Activated CD4-positive, alpha-beta memory T cell treated with anti-CD3 and anti-CD28 coated beads for 36 hours (primary cell): ENCODE measurements at regions of chr15 and their contacts with region 1.

Region 1: DNA sequence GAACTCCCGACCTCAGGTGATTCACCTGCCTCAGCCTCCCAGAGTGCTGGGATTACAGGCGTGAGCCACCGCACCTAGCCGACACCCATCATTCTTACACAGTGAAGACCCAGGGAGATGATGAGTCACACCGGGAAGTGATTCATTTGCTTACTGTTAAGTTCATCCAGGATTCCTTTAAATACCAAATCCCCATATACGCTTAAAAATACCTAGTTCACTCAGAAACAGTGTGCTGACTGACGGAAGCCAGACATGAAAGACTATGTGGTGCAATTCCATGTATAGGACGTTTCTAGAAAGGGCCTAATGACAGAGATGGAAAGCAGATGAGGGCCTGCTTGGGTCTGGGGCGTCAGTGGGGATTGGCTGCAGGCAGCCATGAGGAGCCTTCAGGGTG is 75.2 kb downstream of the APBA2 start:
- DNase-seq: no peak
- H3K4me3 Mint-ChIP-seq: no peak overlapping the region
- H3K27ac Mint-ChIP-seq: no peak overlapping the region
- H3K4me1 Mint-ChIP-seq: peaks cover 10% of the 10 kb centered on the region
- H3K27me3 Mint-ChIP-seq: no peaks in the 10 kb centered on the region

Region 2: DNA sequence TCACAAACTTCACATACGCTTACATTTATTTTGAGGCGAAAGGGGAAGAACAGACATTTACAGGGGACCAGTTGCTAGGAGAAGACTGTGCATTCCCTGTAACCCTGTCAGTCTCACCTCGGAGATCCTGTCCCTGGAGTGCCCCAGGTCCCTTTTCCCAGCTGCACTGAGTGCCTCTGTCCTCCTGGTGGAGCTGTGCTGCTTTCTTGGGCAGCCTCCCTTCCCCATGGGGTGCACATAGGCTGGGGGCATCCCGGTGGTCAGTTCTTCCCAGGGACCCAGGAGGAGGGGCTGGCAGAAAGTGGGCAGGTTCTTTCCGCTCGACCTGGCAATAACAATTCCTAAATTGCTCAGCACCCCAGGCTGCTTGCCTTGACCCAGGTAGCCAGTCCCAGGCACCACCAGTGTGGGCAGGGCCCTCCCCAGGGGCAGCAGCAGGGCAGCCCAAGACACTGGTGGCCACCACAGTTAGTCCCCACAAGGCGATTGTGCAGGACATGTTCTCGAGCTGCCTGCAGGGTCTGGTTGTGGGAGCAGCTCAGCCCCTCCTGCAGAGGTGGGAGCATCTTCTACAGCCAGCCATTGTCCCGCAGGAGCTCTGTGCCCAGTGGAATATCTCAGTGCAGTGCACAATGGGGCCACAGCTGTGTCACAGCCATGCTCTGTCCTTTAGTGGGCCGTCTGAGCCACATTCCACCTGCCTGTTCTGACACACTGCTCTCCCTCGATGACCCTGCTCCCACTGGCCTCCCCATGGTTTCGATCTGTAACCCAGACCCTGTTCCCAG is 38.9 kb before region 1 on chr15:
- CTCF ChIA-PET with region 1: no interaction called
- POLR2A ChIA-PET with region 1: no interaction called
- intact Hi-C with region 1: loop called (anchors 5 kb)
- DNase-seq: no peak
- H3K4me3 Mint-ChIP-seq: no peak overlapping the region
- H3K27ac Mint-ChIP-seq: no peak overlapping the region
- H3K4me1 Mint-ChIP-seq: peaks cover 43% of the 10 kb centered on the region
- H3K27me3 Mint-ChIP-seq: no peaks in the 10 kb centered on the region

Region 3: GRCh38 chr15:29086001-29086400 is 125.0 kb after region 1 on chr15:
- CTCF ChIA-PET with region 1: no interaction called
- POLR2A ChIA-PET with region 1: no interaction called
- intact Hi-C with region 1: no loop called
- DNase-seq: no peak
- H3K4me3 Mint-ChIP-seq: no peak overlapping the region
- H3K27ac Mint-ChIP-seq: no peak overlapping the region
- H3K4me1 Mint-ChIP-seq: peaks cover 10% of the 10 kb centered on the region
- H3K27me3 Mint-ChIP-seq: no peaks in the 10 kb centered on the region

Region 4: GRCh38 chr15:29376590-29376989 is 415.6 kb after region 1 on chr15:
- CTCF ChIA-PET with region 1: no interaction called
- POLR2A ChIA-PET with region 1: no interaction called
- intact Hi-C with region 1: no loop called
- DNase-seq: no peak
- H3K4me3 Mint-ChIP-seq: no peak overlapping the region
- H3K27ac Mint-ChIP-seq: no peak overlapping the region
- H3K4me1 Mint-ChIP-seq: no peaks in the 10 kb centered on the region
- H3K27me3 Mint-ChIP-seq: peaks cover 2% of the 10 kb centered on the region